A549 (cell line): ENCODE measurements at regions of chr19 and their contacts with region 1.

Region 1: DNA sequence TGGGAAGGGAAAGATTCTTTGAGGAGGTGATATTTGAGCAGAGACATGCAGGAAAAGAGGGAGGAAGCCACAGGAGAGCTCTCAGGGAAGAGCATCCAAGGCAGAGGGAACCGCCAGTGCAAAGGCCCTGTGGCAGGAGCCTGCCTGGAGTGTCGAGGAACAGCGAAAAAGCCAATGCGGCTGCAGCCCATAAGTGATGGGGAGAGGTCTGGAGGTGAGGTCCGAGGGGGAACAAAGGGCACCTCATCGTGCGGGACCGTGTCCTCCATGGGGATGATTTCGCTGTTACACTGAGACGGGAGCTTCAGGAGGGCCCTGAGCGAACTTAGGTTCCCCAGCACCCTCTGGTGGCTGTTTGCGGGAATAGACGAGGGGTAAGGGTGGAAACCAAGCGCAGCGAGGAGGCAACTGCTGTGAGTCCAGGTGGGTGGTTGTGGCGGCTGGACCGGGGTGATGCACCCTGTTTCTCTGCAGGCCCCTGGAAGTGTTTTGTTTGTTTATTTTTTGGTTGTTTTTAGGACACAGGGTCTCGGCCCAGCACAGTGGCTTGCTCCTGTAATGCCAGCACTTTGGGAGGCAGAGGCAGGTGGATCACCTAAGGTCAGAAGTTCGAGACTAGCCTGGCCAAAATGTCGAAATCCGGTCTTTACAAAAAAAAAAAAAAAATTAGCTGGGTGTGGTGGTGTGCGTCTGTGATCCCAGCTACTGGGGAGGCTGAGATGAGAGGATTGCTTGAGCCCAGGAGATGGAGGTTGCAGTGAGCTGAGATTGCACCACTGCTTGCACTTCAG is 5.9 kb upstream of the EHD2 start:
- DNase-seq: peak; percentile 76 to 93
- ATAC-seq: peak; percentile 94 to 97
- H3K4me3 ChIP-seq: no peak overlapping the region
- H3K27ac ChIP-seq: no peak overlapping the region
- H3K4me1 ChIP-seq: 0 out of 3 replicates have a peak, but pooled peaks cover 5% of the 10 kb centered on the region
- CTCF ChIP-seq: peak; percentile 86
- EP300 ChIP-seq: no peak
- POLR2A ChIP-seq: no peak
- RAD21 ChIP-seq: peak; percentile 90 to 94

Region 2: DNA sequence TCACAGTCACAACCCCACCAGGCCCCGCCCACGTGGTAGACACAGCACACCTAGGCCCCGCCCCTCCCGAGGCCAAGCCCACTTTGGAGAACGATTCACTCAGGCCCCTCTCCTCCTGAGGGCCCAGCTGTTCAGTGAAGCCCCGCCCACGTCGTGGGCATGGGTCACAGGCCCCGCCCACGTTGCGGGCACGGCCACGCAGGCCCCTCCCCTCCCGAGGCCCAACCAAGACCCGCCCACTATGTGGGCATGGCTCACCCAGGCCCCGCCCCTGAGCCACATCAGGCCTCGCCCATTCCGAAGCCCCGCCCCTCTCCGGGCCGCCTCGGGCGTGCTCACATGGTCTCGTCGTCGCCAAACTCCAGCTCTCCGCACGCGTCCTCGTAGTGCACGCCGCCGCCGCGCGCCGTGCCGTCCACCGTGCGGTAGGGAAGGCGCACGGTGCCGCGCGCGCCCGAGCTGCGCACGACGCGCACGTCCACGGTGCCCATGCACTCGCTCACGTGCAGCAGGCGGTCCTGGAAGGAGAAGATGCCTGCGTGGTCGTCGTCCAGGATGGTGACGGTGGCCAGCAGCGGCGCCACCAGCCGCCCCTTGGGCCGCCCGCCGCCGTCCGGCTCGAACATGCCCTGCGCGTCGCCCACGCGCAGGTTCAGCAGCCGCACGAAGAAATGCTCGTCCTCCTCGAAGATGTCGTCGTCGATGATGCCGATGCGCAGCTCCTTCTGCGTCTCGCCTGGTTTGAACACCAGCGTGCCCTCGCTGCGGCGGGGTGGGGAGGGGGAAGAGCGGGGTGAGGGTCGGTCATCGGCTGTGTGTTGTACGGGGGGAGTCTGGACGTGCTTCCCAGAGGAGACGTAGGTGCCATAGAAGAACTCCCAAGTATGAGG is 259.6 kb before region 1 on chr19:
- CTCF ChIA-PET with region 1: interaction called, 901 read pairs
- POLR2A ChIA-PET with region 1: no interaction called
- DNase-seq: peak; percentile 67 to 92
- ATAC-seq: peak; percentile 54 to 72
- H3K4me3 ChIP-seq: peak overlapping the region; percentile 50
- H3K27ac ChIP-seq: peak overlapping the region; percentile 46 to 51; a peak in 5 of 6 replicates
- H3K4me1 ChIP-seq: peaks cover 26% of the 10 kb centered on the region
- CTCF ChIP-seq: no peak
- EP300 ChIP-seq: no peak
- POLR2A ChIP-seq: no peak
- RAD21 ChIP-seq: no peak

Region 3: DNA sequence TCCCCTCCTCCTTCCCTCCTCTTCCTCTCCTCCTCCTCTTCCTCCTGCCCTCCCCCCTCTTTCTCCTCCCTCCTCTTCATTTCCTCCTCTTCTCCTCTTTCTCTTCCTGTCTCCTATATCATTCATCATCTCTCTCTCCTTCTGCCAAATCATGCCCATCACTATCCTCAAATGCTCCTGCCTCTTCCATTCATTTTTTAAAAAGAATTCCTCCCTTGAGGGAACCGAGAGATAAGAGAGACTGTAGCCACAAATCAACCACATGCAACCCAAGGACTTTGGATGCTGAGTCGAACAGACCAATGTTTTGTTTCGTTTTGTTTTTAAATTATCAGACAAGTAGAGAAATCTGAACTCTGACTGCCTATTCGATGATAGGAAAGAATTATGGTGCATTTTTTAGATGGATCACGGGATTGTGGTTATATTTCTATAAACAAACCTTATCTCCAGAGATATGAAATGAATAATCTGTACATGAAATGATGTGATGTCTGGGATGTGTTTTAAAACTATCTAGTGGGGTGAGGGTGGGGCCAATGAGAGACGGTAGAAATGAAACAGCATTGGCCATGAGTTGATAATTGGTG is 124.9 kb before region 1 on chr19:
- CTCF ChIA-PET with region 1: no interaction called
- POLR2A ChIA-PET with region 1: no interaction called
- DNase-seq: no peak
- ATAC-seq: no peak
- H3K4me3 ChIP-seq: no peak overlapping the region
- H3K27ac ChIP-seq: no peak overlapping the region
- H3K4me1 ChIP-seq: no peaks in the 10 kb centered on the region
- CTCF ChIP-seq: no peak
- EP300 ChIP-seq: no peak
- POLR2A ChIP-seq: no peak
- RAD21 ChIP-seq: no peak

Region 4: DNA sequence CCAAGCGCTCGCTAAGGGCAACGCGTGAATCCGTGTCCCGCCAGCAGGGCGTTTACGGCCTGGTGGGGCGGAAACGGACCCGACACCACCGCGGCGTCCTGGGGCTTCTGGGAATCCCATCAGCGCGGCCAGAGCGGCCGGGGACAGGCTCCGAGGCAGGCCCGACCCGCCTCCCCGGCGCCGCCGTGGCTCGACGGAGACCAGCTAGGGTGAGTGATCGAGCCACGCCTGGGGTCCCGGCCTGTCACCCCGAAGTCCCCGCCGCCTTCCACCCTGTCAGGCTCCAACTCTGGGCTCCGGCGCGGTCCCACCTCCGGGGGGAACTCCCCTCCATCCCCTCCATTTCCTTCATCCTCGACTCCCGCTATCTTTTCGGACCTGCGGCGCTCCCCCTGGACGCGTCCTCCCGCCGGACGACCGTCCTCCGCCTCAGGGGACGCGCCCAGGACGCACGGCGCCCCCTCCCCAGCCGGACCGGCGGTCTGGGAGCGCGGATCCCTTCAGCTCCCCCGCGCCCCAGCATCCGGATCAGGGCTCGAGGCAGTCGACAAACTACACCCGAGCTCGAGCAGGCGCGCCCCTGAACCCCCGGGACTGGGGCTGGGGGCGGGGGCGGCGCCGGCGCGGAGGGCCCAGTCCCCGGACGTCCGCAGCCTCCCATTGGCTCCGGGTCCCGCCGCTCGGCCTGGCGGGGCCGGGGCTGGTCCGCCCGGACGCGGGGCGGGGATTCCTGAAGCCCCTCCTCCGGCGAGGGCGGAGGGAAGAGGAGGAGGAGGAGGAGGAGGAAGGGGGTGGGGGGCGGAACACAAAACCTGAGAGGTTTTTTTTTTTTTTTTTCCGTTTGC is 99.0 kb before region 1 on chr19:
- CTCF ChIA-PET with region 1: interaction called, 10 read pairs
- POLR2A ChIA-PET with region 1: no interaction called
- DNase-seq: peak; percentile 94
- ATAC-seq: peak; percentile 85 to 93
- H3K4me3 ChIP-seq: peak overlapping the region; percentile 92
- H3K27ac ChIP-seq: peak overlapping the region; percentile 93 to 96
- H3K4me1 ChIP-seq: peaks cover 21% of the 10 kb centered on the region
- CTCF ChIP-seq: no peak
- EP300 ChIP-seq: no peak
- POLR2A ChIP-seq: peak; percentile 73
- RAD21 ChIP-seq: no peak

Region 5: GRCh38 chr19:47765523-47766358 is 58.4 kb after region 1 on chr19:
- CTCF ChIA-PET with region 1: interaction called, 1,389 read pairs
- POLR2A ChIA-PET with region 1: interaction called, 3 read pairs
- DNase-seq: peak; percentile 58 to 74
- ATAC-seq: peak; percentile 66 to 85
- H3K4me3 ChIP-seq: no peak overlapping the region
- H3K27ac ChIP-seq: no peak overlapping the region
- H3K4me1 ChIP-seq: no peaks in the 10 kb centered on the region
- CTCF ChIP-seq: peak; percentile 83
- EP300 ChIP-seq: no peak
- POLR2A ChIP-seq: no peak
- RAD21 ChIP-seq: peak; percentile 61 to 84